ENCODE measurements at regions of chr14 and their contacts with region 1.

Region 1: DNA sequence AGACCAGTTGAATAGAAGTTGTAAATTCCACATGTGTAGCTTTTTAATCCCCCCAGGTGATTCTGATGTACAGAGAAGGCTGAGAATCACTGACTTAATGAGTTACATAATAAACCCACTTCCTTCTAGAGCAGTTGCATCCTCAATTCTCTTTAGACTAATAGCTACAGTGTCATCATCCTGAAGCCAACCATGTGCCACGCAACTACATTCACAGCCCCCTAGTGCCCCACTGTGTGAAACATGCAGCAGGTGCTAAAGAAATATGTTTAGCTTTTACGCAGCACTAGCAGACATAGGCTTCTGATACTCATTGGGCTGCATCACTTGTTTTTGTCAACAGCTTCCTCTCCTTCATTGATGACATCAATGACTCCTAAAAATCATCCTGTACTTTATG is 1168.3 kb downstream of the BCL11B start:
- DNase-seq: peak; percentile 61
- H3K4me3 Mint-ChIP-seq: no peak overlapping the region
- H3K27ac Mint-ChIP-seq: no peak overlapping the region
- H3K4me1 Mint-ChIP-seq: peaks cover 49% of the 10 kb centered on the region
- H3K27me3 Mint-ChIP-seq: no peaks in the 10 kb centered on the region

Region 2: DNA sequence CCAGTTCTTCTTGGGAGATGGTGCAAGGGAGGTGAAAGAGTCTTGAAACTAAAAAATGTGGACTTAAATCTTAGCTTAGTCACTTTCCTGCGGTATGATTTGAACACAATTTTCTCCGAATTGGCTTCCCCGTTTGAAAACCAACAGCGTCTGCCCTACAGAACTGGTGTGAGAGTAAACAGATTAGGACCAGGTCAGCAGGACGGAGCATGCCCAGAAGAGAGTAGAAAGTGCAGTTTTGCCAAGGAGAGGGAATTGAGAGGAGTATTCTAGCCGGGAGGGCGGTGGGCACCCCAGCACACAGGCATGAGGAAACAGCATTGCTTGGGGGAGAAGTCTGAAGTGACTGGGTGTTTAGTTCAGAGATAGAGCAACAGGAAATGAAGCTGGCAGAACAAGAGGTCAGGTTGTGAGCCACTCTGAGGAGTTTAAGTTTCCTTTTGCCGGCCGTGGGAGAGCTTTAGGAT is 379.4 kb before region 1 on chr14:
- CTCF ChIA-PET with region 1: no interaction called
- intact Hi-C with region 1: loop called (anchors 1 kb)
- DNase-seq: peak; percentile 64
- H3K4me3 Mint-ChIP-seq: peak overlapping the region; percentile 76
- H3K27ac Mint-ChIP-seq: peak overlapping the region; percentile 96
- H3K4me1 Mint-ChIP-seq: peaks cover 69% of the 10 kb centered on the region
- H3K27me3 Mint-ChIP-seq: no peaks in the 10 kb centered on the region

Region 3: GRCh38 chr14:97994020-97994531 is 109.6 kb before region 1 on chr14:
- CTCF ChIA-PET with region 1: no interaction called
- intact Hi-C with region 1: loop called (anchors 1 kb)
- DNase-seq: peak; percentile 71
- H3K4me3 Mint-ChIP-seq: peak overlapping the region; percentile 70
- H3K27ac Mint-ChIP-seq: peak overlapping the region; percentile 100
- H3K4me1 Mint-ChIP-seq: peaks cover 82% of the 10 kb centered on the region
- H3K27me3 Mint-ChIP-seq: no peaks in the 10 kb centered on the region

Region 4: DNA sequence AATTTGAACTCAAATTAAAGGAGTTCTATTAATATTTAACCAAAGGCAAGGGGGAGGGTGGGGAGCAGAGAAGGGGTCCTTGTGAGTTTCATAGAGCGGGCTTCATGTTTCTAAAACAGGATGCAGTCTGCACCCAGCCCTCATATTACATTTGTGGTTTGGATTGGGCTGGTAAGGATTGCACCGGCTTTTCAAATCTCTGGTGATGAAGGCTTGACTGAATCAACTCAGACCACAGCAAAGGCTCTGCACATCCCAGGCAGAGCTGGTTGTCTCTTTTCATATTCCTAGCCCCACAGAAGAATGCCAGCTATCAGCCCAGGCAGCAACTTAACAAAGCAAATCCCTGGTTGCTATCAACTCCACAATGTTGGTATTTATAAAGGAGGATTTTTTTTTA is 85.1 kb before region 1 on chr14:
- CTCF ChIA-PET with region 1: interaction called, 3 read pairs
- intact Hi-C with region 1: loop called (anchors 2 kb)
- DNase-seq: peak; percentile 75
- H3K4me3 Mint-ChIP-seq: no peak overlapping the region
- H3K27ac Mint-ChIP-seq: peak overlapping the region; percentile 2
- H3K4me1 Mint-ChIP-seq: peaks cover 87% of the 10 kb centered on the region
- H3K27me3 Mint-ChIP-seq: no peaks in the 10 kb centered on the region

Region 5: DNA sequence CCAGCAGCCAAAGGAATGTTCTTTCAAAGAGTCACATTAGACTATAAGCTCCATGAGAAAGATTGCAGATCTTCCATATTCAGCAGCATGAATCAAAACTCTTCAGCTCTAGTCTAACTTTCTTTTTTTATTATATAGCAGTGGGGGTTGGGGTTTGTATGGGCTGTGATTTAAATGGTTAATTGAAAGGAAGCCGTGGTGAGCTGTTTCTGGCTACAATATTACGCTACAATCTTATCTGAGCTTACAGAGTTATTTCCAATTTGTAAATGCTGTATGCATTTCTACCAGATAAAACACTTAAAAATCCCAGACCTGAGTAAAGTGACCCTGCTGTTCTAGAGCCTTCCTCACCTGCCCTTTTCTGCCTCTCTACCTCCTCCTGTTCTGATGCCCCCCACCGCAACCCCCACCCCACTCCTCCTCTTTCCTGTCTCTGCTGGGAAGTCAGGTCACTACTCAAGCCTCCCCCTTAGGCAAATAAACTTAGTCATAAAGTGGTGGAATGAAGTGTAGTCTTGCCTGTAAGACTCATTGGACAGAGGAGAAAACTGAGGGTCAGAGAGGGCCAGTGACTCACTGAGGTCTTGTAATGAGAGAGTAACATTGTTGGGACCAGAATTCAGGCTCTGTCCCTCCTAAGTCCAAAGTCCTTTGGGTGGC is 78.8 kb after region 1 on chr14:
- CTCF ChIA-PET with region 1: no interaction called
- intact Hi-C with region 1: loop called (anchors 1 kb)
- DNase-seq: peak; percentile 81
- H3K4me3 Mint-ChIP-seq: peak overlapping the region; percentile 45
- H3K27ac Mint-ChIP-seq: peak overlapping the region; percentile 96
- H3K4me1 Mint-ChIP-seq: peaks cover 92% of the 10 kb centered on the region
- H3K27me3 Mint-ChIP-seq: no peaks in the 10 kb centered on the region

Measured in activated naive CD4-positive, alpha-beta T cell treated with anti-CD3 and anti-CD28 coated beads for 36 hours (primary cell).